ENCODE measurements at regions of chr1 and their contacts with region 1.

Region 1: GRCh38 chr1:11294951-11295350 is 22.0 kb downstream of the UBIAD1 start:
- DNase-seq: no peak
- ATAC-seq: no peak
- H3K4me3 ChIP-seq: no peak overlapping the region
- H3K27ac ChIP-seq: no peak overlapping the region
- H3K4me1 ChIP-seq: peaks cover 20 to 25% of the 10 kb centered on the region in 2 donors
- H3K27me3 ChIP-seq: no peaks in the 10 kb centered on the region
- CTCF ChIP-seq: no peak
- POLR2A ChIP-seq: no peak

Region 2: DNA sequence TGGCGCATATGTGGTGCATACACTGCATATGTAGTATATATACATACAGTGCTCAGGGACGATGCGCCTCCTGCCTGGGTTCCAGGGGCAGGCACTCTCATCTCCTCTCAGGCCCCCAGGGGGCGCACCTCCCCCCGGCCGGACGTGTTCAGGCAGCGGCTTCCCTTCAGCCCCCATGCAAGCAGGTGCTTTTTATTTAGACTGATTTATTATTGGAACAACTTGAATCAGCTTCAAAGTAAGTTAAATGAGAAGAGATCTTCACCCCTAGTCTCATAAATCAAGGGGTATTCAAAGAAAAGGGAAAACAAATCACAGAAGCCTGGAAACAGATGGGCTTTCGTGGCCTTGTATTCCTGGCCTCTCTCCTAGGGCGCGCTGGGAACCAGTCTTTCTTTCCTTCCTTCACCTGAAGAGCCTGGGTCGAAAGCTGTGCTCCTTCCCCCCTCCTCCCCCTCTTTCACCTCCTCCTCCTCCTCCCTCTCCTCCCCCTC is 42.7 kb after region 1 on chr1:
- in situ Hi-C with region 1: no loop called
- intact Hi-C with region 1: loop called (anchors 5 kb)
- DNase-seq: peak in 1 of 2 donors; percentile 42
- ATAC-seq: no peak
- H3K4me3 ChIP-seq: no peak overlapping the region
- H3K27ac ChIP-seq: no peak overlapping the region
- H3K4me1 ChIP-seq: peaks cover 12 to 33% of the 10 kb centered on the region in 2 donors
- H3K27me3 ChIP-seq: no peaks in the 10 kb centered on the region
- CTCF ChIP-seq: peak; percentile 57 to 80 (median 67)
- POLR2A ChIP-seq: no peak